CD4-positive, alpha-beta memory T cell (primary cell): ENCODE measurements at regions of chr2 and their contacts with region 1.

Region 1: DNA sequence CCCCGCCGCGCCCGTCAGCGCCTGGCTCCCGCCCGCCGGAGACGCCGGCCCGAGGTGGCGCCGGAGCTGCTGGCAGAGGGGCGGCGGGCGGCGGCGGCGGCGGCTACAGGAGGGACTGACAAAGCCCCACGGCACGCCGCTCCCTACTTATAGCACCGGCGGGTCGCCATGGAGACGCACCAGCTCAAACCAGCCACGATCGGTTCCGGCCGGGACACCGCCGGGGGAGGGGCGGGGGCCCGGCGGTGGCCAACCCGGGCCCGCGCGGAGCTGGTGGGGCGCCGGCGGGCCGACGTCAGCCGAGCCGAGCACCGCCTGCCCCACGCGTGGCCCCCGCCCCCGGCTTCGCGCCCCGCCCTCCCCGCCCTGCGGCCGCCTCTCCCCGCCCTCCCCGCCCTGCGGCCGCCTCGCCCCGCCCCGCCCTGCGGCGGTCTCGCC is at the start of gene ODC1:
- DNase-seq: peak; percentile 97 to 99 (median 98)
- H3K4me3 ChIP-seq: peak within 1 kb of the TSS; percentile 47 to 90
- H3K4me3 Mint-ChIP-seq: peak within 1 kb of the TSS; percentile 86 to 95 (median 90)
- H3K27ac ChIP-seq: peak within 1 kb of the TSS; percentile 86
- H3K27ac Mint-ChIP-seq: peak within 1 kb of the TSS; percentile 88 to 96 (median 93)
- H3K4me1 ChIP-seq: peaks cover 42% of the 10 kb centered on the region
- H3K4me1 Mint-ChIP-seq: peaks cover 17 to 57% (median 41%) of the 10 kb centered on the region in 4 donors
- H3K27me3 ChIP-seq: no peaks in the 10 kb centered on the region
- H3K27me3 Mint-ChIP-seq: no peaks in the 10 kb centered on the region
- total RNA-seq, gene ODC1: 32.5 to 35.4 TPM

Region 2: GRCh38 chr2:9813312-9814133 is 634.7 kb before region 1 on chr2:
- CTCF ChIA-PET with region 1: no interaction called
- POLR2A ChIA-PET with region 1: no interaction called
- intact Hi-C with region 1: loop called (anchors 10 kb)
- DNase-seq: peak; percentile 43 to 64 (median 58)
- H3K4me3 ChIP-seq: no peak overlapping the region
- H3K4me3 Mint-ChIP-seq: no peak overlapping the region
- H3K27ac ChIP-seq: no peak overlapping the region
- H3K27ac Mint-ChIP-seq: peak overlapping the region in 1 of 7 donors; percentile 77
- H3K4me1 ChIP-seq: peaks cover 6% of the 10 kb centered on the region
- H3K4me1 Mint-ChIP-seq: peaks cover 9 to 16% (median 12%) of the 10 kb centered on the region in 4 donors
- H3K27me3 ChIP-seq: no peaks in the 10 kb centered on the region
- H3K27me3 Mint-ChIP-seq: peaks cover 2 to 5% of the 10 kb centered on the region in 2 donors

Region 3: DNA sequence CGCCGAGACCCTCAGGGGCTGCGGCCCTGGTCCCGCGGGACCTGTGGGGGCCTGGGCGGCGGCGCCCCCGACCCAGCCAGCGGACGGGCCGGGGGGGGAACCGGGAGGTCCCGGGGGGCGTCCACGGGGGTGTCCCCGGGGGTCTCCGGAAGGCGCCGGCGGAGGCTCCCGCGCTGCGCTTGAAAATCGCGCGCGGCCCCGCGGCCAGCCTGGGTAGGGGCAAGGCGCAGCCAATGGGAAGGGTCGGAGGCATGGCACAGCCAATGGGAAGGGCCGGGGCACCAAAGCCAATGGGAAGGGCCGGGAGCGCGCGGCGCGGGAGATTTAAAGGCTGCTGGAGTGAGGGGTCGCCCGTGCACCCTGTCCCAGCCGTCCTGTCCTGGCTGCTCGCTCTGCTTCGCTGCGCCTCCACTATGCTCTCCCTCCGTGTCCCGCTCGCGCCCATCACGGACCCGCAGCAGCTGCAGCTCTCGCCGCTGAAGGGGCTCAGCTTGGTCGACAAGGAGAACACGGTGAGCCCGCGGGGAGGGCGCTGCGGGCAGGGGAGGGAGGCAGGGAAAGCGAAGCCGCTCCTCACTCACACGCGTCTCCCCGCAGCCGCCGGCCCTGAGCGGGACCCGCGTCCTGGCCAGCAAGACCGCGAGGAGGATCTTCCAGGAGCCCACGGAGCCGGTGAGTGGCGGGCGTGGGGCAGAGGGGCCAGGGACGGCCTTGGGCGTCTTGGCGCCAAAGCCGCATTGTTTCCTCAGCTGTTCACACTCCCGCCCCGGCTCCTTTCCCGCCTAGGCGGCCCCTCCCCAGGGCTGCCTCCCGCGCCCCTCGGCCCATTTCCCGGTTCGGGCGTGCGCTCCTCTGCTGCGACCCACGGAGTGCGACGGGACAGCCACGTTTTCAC is 325.6 kb before region 1 on chr2 and contains the start of gene RRM2:
- CTCF ChIA-PET with region 1: interaction called, 5 read pairs
- POLR2A ChIA-PET with region 1: interaction called, 12 read pairs
- intact Hi-C with region 1: loop called (anchors 1 kb)
- DNase-seq: peak; percentile 81 to 87 (median 85)
- H3K4me3 ChIP-seq: peak within 1 kb of the TSS; percentile 32 to 50
- H3K4me3 Mint-ChIP-seq: peak within 1 kb of the TSS; percentile 89 to 99 (median 98)
- H3K27ac ChIP-seq: no peak within 1 kb of the TSS
- H3K27ac Mint-ChIP-seq: peak within 1 kb of the TSS; percentile 51 to 91 (median 58)
- H3K4me1 ChIP-seq: peaks cover 52% of the 10 kb centered on the region
- H3K4me1 Mint-ChIP-seq: peaks cover 32 to 56% (median 42%) of the 10 kb centered on the region in 4 donors
- H3K27me3 ChIP-seq: peaks cover 5% of the 10 kb centered on the region
- H3K27me3 Mint-ChIP-seq: peaks cover 5 to 12% of the 10 kb centered on the region in 2 donors
- total RNA-seq, gene RRM2: 0.42 TPM in 1 of 2 experiments, not detected in the other

Region 4: DNA sequence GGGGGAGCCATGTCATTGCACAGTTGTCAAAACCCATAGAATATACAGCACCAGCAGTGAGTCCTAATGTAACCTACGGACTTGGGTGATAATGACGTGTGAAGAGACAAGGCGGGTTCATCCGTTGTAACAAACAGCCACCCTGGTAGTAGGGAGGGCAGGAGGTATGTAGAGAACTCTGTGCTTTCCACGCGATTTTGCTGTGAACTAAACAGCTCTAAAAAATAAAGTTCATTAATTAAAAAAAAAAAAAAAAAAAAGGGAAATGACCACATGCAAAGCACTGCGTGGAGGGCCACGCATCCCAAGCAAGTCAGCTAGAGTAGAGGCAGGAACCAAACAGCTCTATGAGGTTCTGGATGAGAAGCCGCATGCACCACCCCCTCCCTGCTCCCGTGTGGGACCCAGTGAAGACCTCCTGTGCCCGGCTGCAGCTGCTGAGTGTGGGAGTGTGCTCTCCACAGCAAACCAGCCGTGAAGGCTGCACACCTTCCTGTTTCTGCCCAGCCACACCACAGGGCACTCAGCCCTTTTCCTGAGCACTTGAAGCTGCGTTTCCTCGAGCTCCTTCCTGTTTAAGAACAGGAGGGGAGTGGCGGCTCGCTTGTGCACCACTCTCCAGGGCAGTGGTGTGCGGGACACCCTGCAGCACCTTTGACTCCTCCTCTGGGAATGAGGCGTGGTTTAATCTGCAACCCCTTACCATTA is 65.7 kb before region 1 on chr2:
- CTCF ChIA-PET with region 1: interaction called, 3 read pairs
- POLR2A ChIA-PET with region 1: interaction called, 13 read pairs
- intact Hi-C with region 1: no loop called
- DNase-seq: peak; percentile 63 to 79 (median 72)
- H3K4me3 ChIP-seq: peak overlapping the region; percentile 40 to 68
- H3K4me3 Mint-ChIP-seq: peak overlapping the region; percentile 63 to 85 (median 80)
- H3K27ac ChIP-seq: peak overlapping the region; percentile 36
- H3K27ac Mint-ChIP-seq: peak overlapping the region; percentile 69 to 96 (median 92)
- H3K4me1 ChIP-seq: peaks cover 97% of the 10 kb centered on the region
- H3K4me1 Mint-ChIP-seq: peaks cover 68 to 96% (median 86%) of the 10 kb centered on the region in 4 donors
- H3K27me3 ChIP-seq: no peaks in the 10 kb centered on the region
- H3K27me3 Mint-ChIP-seq: no peaks in the 10 kb centered on the region

Region 5: DNA sequence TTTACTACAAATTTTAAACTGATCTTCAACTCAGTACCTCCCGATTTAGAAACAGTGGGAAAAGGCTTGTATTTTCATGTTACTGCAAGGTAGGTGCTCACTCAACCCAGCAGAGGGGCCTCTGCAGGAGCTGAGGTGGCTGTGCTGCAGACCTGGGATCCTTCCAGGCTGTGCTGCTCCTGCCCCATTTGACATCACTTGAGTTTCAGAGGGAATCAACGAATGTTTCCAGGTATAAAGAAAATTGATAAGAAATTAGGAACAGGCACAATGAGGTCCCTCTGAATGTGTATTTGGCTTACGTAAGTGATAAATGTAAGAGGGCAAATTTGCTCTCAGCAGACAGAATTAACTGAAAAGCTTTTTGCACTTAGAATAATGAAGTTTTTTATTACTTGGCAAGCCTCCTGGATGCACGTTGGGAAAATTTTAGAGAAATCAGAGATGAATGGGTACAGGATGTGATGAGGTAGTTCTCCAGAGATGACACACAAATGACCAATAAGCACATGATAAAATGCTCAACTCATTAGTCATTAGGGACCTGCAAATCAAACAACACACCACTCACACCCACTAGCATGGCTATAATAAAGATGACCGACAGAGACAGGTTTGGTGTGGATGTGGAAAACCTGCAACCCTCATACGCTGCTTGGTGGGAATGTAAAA is 127.5 kb after region 1 on chr2:
- CTCF ChIA-PET with region 1: no interaction called
- POLR2A ChIA-PET with region 1: no interaction called
- intact Hi-C with region 1: loop called (anchors 10 kb)
- DNase-seq: no peak
- H3K4me3 ChIP-seq: no peak overlapping the region
- H3K4me3 Mint-ChIP-seq: no peak overlapping the region
- H3K27ac ChIP-seq: no peak overlapping the region
- H3K27ac Mint-ChIP-seq: no peak overlapping the region
- H3K4me1 ChIP-seq: no peaks in the 10 kb centered on the region
- H3K4me1 Mint-ChIP-seq: peaks cover 0 to 5% (median under 1%) of the 10 kb centered on the region in 4 donors
- H3K27me3 ChIP-seq: no peaks in the 10 kb centered on the region
- H3K27me3 Mint-ChIP-seq: no peaks in the 10 kb centered on the region

Region 6: DNA sequence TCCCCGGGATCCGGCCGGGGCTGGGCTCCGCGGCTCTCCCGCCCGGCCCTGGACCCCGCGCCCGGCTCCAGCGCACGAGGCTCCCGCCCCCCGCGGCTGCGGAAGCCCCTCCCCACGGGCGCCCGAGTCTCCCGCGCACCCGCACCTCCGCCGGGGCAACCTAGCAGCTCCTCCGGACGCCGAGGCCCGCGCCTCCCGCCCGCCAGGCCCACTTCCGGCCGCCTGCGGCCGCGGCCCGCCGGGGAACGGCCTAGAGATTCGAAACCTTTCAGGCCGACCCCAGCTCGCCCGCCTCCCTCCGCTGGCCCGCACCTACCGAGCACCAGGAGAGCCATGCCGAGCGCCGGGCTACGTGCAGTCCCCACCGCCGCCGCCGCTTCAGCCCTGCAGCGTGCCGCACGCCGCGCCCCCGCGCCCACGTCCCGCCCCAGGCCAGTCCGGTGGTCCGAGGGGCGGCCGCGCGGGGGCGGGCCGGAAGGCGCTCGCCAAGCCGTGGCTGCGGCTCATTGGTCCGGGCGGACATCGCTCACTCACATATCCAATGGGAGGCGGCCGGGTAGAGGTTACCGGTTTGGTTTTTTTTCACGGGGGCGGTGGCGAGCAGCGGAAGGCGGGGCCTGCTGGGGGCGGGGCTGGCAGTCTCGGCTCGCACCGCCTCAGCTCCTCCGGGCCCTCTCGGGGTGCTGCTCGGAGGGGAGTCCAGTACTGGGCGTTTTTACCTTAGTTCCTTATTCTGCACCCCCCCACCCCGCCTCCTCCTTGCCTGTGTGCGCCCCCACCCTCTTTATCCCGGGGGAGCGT is 364.3 kb after region 1 on chr2 and contains the start of gene PDIA6:
- CTCF ChIA-PET with region 1: no interaction called
- POLR2A ChIA-PET with region 1: interaction called, 6 read pairs
- intact Hi-C with region 1: loop called (anchors 10 kb)
- DNase-seq: peak; percentile 90 to 95 (median 92)
- H3K4me3 ChIP-seq: peak within 1 kb of the TSS; percentile 72 to 92
- H3K4me3 Mint-ChIP-seq: peak within 1 kb of the TSS; percentile 84 to 95 (median 94)
- H3K27ac ChIP-seq: peak within 1 kb of the TSS; percentile 76
- H3K27ac Mint-ChIP-seq: peak within 1 kb of the TSS; percentile 76 to 95 (median 94)
- H3K4me1 ChIP-seq: peaks cover 47% of the 10 kb centered on the region
- H3K4me1 Mint-ChIP-seq: peaks cover 30 to 43% (median 34%) of the 10 kb centered on the region in 4 donors
- H3K27me3 ChIP-seq: peaks cover under 1% of the 10 kb centered on the region
- H3K27me3 Mint-ChIP-seq: no peaks in the 10 kb centered on the region
- total RNA-seq, gene PDIA6: 75.9 to 84.7 TPM

Region 7: DNA sequence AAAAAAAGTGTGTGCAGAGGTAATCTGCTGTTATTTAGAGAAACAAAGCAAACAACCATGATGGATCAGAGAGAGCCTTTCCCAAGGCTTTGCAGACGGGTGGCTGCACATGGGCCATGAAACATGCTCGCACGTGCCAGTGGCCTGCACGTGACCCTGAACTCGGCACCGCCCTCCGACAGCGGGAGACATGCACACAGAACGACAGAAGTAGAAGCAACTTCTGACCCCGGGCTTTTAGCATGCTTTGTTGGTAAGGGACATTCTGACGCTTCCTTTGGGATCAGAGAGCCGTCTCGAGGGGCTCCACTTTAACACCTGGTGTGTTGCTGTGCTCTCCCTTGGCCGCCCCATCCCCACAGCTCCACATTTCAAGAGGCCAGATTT is 576.0 kb after region 1 on chr2:
- CTCF ChIA-PET with region 1: no interaction called
- POLR2A ChIA-PET with region 1: no interaction called
- intact Hi-C with region 1: no loop called
- DNase-seq: no peak
- H3K4me3 ChIP-seq: no peak overlapping the region
- H3K4me3 Mint-ChIP-seq: no peak overlapping the region
- H3K27ac ChIP-seq: no peak overlapping the region
- H3K27ac Mint-ChIP-seq: no peak overlapping the region
- H3K4me1 ChIP-seq: no peaks in the 10 kb centered on the region
- H3K4me1 Mint-ChIP-seq: peaks cover 0 to 1% (median 0%) of the 10 kb centered on the region in 4 donors
- H3K27me3 ChIP-seq: no peaks in the 10 kb centered on the region
- H3K27me3 Mint-ChIP-seq: peaks cover 0 to 12% of the 10 kb centered on the region in 2 donors